ENCODE measurements at regions of chr11 and their contacts with region 1.

Region 1: DNA sequence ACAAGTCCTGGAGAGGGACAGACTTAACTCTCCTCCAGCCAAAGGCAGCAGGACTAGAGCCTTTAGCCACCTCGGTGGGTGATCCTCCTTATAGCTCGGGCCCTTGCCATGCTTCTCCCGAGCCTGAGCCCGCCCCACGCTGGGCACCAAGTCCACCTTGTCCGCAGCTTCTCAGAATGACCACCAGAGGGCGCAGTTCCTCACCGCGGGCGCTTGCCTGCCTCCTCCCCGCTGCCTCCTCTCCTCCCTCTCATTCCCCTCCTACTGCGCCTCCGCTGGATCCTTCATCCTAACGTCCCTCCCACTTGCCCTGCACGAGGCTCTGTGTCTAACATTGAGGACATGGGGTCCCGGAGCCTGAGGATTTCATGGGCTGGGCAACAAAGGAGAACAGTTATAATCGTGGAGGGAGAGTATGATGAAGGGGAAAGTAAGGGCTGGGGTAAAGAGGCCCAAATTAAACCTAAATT is 11.3 kb upstream of the MOGAT2 start:
- DNase-seq: peak; percentile 75
- H3K4me3 Mint-ChIP-seq: no peak overlapping the region
- H3K27ac Mint-ChIP-seq: no peak overlapping the region
- H3K4me1 Mint-ChIP-seq: peaks cover 5% of the 10 kb centered on the region
- H3K27me3 Mint-ChIP-seq: no peaks in the 10 kb centered on the region

Region 2: DNA sequence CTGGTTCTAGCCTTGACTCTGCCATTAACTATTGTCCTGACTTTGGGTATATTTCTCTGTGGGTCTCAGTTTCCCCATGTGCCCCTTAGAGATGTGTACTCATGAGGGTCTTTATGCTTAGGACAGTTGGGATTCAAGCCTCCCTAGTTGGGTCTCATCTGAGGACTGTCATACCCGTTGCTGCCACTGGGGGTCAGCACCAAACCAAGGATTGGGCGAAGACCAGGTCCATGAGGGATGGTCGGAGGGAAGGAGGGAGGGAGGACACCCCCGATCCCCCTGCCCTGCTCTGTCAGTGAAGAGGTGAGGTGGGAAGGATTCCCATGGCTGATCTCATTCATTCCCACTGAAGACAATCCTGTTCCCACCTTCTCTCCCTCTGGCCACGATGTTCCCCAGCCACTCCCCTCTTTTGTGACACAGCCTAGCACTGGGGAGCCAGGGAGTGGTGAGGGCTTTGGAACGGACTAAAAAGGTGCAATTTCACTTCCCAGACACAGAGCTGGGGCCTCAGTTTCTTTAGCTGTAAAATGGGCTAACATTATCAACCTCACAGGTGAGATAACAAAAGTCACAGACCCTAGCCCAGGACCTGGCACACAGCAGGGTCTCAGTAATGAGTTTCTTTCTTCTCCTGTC is 260.9 kb before region 1 on chr11:
- CTCF ChIA-PET with region 1: no interaction called
- intact Hi-C with region 1: loop called (anchors 1 kb)
- DNase-seq: peak; percentile 82
- H3K4me3 Mint-ChIP-seq: no peak overlapping the region
- H3K27ac Mint-ChIP-seq: no peak overlapping the region
- H3K4me1 Mint-ChIP-seq: no peaks in the 10 kb centered on the region
- H3K27me3 Mint-ChIP-seq: no peaks in the 10 kb centered on the region

Region 3: GRCh38 chr11:75492181-75492820 is 214.0 kb before region 1 on chr11:
- CTCF ChIA-PET with region 1: no interaction called
- intact Hi-C with region 1: no loop called
- DNase-seq: peak; percentile 89
- H3K4me3 Mint-ChIP-seq: peak overlapping the region; percentile 73
- H3K27ac Mint-ChIP-seq: peak overlapping the region; percentile 89
- H3K4me1 Mint-ChIP-seq: peaks cover 14% of the 10 kb centered on the region
- H3K27me3 Mint-ChIP-seq: no peaks in the 10 kb centered on the region

Region 4: DNA sequence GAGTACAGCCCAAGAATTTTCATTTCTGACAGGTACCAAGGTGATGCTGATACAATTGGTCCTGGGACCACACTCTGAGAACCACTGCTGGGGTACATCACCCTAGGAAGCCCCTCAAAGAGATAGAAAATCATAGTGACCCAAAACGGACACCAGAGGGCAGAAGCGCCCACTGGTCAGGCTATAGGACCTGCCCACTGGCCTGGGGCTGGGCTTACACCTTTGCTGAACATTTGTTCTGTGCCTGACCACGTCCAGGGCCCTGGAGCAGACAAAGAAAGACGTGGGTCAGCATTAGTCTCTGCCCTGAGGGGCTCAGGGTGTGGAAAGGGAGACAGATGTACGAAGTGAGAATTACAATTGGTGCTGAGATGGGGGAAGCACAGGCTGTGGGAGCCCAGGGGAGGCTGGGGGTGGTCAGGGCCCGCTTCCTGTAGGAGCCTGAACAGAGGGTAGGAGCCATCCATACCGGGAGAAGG is 158.7 kb before region 1 on chr11:
- CTCF ChIA-PET with region 1: no interaction called
- intact Hi-C with region 1: loop called (anchors 10 kb)
- DNase-seq: peak; percentile 59
- H3K4me3 Mint-ChIP-seq: no peak overlapping the region
- H3K27ac Mint-ChIP-seq: no peak overlapping the region
- H3K4me1 Mint-ChIP-seq: peaks cover 8% of the 10 kb centered on the region
- H3K27me3 Mint-ChIP-seq: no peaks in the 10 kb centered on the region

Region 5: GRCh38 chr11:75562048-75562835 is 144.1 kb before region 1 on chr11 and contains the start of gene SERPINH1:
- CTCF ChIA-PET with region 1: no interaction called
- intact Hi-C with region 1: no loop called
- DNase-seq: peak; percentile 90
- H3K4me3 Mint-ChIP-seq: peak within 1 kb of the TSS; percentile 94
- H3K27ac Mint-ChIP-seq: peak within 1 kb of the TSS; percentile 97
- H3K4me1 Mint-ChIP-seq: peaks cover 27% of the 10 kb centered on the region
- H3K27me3 Mint-ChIP-seq: no peaks in the 10 kb centered on the region
- total RNA-seq, gene SERPINH1: 13.9 to 15.4 TPM

Region 6: GRCh38 chr11:75691804-75692203 is 14.5 kb before region 1 on chr11:
- CTCF ChIA-PET with region 1: interaction called, 11 read pairs
- intact Hi-C with region 1: no loop called
- DNase-seq: no peak
- H3K4me3 Mint-ChIP-seq: no peak overlapping the region
- H3K27ac Mint-ChIP-seq: no peak overlapping the region
- H3K4me1 Mint-ChIP-seq: peaks cover 14% of the 10 kb centered on the region
- H3K27me3 Mint-ChIP-seq: peaks cover 44% of the 10 kb centered on the region

Region 7: DNA sequence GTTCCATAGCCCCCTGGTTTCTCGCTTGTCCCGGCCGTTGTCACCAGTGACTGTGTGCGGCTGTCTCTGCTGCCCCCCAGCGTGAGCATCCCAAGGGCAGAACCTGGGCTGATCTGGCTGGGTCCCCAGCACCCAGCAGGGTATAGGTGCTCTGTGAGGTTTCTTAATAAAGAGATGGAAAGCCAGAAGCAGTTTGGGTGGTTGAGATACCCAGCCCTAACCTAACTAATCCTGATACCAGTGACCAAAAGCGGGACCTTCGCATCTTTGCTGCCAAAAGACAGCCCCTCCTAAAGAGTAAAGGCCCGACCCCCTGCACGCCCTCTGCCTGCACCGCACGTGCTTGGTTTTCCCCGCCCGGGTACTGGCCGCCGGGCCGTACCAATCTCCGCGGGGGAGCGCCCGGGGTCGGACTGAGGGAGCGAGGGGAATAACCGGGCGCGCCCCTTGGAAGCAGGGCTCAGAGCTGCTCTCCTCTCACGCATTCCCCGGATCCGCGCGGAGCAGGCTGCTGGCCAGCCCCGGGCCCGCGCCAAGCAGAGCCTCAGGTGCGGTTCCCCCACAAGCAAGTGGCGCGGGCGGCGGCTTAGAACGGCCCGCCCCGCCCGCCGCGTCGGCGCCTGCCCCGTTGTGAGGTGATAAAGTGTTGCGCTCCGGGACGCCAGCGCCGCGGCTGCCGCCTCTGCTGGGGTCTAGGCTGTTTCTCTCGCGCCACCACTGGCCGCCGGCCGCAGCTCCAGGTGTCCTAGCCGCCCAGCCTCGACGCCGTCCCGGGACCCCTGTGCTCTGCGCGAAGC is 62.0 kb after region 1 on chr11 and contains the start of gene DGAT2:
- CTCF ChIA-PET with region 1: interaction called, 4 read pairs
- intact Hi-C with region 1: loop called (anchors 2 kb)
- DNase-seq: peak; percentile 77
- H3K4me3 Mint-ChIP-seq: peak within 1 kb of the TSS; percentile 64
- H3K27ac Mint-ChIP-seq: no peak within 1 kb of the TSS
- H3K4me1 Mint-ChIP-seq: peaks cover 24% of the 10 kb centered on the region
- H3K27me3 Mint-ChIP-seq: peaks cover 4% of the 10 kb centered on the region
- total RNA-seq, gene DGAT2: 3.4 to 4.2 TPM

Region 8: DNA sequence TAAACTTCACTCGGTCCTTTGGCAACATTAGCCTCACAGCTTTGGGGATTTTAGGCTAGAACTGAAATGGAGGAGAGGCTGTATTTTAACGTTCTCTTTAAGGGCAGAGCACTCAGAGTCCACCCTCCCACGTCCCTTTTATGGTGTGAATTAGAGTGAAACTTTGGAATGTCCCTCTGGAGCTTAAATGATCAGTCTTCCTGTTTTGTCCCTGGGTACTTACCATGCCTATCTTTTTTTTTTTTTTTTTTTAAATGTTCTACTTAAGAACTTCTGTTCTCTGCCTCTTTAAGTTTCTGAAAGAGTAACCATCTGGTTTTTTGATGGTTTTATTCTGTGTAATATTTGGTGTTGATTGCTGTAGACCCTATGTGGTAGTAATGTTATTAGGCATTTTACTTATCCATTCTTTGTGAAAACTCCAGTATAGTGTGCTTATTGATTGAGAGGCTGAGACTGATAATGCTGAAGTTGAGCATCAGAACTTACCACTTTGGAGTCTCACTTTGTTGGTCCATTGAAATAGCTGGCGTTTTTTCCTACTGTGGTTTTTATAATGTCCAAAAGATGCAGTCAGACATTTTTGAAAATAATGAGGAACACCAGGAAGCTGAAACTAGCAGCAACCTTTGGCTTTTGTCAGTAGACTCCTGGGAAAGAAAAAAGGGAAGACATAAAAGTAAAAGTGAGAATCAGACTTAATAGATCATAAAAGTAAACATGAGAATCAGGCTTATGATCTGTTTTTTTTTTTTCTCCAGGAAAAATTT is 120.4 kb after region 1 on chr11:
- CTCF ChIA-PET with region 1: no interaction called
- intact Hi-C with region 1: no loop called
- DNase-seq: no peak
- H3K4me3 Mint-ChIP-seq: no peak overlapping the region
- H3K27ac Mint-ChIP-seq: no peak overlapping the region
- H3K4me1 Mint-ChIP-seq: peaks cover 20% of the 10 kb centered on the region
- H3K27me3 Mint-ChIP-seq: no peaks in the 10 kb centered on the region

Region 9: DNA sequence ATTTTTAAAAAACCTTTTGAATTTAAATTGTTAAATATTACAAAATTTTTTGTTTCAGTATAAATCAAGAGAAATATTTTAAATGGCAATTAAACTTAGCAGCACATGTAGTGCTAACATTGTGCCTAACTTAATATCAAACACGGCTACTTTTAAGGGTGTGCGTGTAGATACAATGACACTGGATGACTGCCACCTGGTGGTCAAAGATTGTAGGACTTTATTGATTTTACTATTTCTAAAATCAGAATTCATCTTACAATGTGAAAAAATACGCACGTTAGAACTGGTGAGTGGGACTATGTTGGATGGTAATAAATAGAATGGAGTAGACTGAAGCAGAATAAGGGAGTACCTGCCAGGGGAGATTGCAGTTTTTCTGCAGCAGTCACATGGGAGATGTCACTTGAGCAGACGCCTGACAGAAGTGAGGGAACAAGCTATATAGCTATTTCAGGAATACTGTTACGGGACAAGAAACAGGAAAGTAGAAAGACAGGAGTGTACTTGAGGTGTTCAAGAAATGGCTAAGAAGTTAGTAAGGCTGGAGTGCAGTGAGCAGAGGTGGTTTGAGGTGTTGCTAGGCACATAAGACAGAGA is 161.6 kb after region 1 on chr11:
- CTCF ChIA-PET with region 1: interaction called, 4 read pairs
- intact Hi-C with region 1: loop called (anchors 1 kb)
- DNase-seq: peak; percentile 61
- H3K4me3 Mint-ChIP-seq: no peak overlapping the region
- H3K27ac Mint-ChIP-seq: no peak overlapping the region
- H3K4me1 Mint-ChIP-seq: peaks cover 8% of the 10 kb centered on the region
- H3K27me3 Mint-ChIP-seq: no peaks in the 10 kb centered on the region

Region 10: GRCh38 chr11:76318744-76319384 is 612.6 kb after region 1 on chr11:
- CTCF ChIA-PET with region 1: no interaction called
- intact Hi-C with region 1: loop called (anchors 5 kb)
- DNase-seq: peak; percentile 89
- H3K4me3 Mint-ChIP-seq: no peak overlapping the region
- H3K27ac Mint-ChIP-seq: no peak overlapping the region
- H3K4me1 Mint-ChIP-seq: peaks cover 2% of the 10 kb centered on the region
- H3K27me3 Mint-ChIP-seq: peaks cover 28% of the 10 kb centered on the region